Dorsolateral prefrontal cortex (tissue), 120 donors: ENCODE measurements at regions of chr17 and their contacts with region 1.

Region 1: GRCh38 chr17:30093463-30094147 is 23.0 kb upstream of the NSRP1 start:
- DNase-seq: peak in 4 of 10 donors; percentile 32 to 50 (median 44)
- H3K4me3 ChIP-seq: peak overlapping the region in 3 of 59 donors; percentile 16 to 31 (median 20)
- H3K27ac ChIP-seq: no peak overlapping the region
- H3K27me3 ChIP-seq: peaks cover 0 to under 1% (median 0%) of the 10 kb centered on the region in 45 donors
- CTCF ChIP-seq: peak; percentile 70 to 96 (median 86)

Region 2: GRCh38 chr17:29579866-29580771 is 513.5 kb before region 1 on chr17:
- intact Hi-C with region 1: loop called in 1 of 2 experiments (anchors 10 kb)
- DNase-seq: peak; percentile 90 to 94 (median 92)
- H3K4me3 ChIP-seq: peak overlapping the region in 3 of 59 donors; percentile 8 to 27 (median 15)
- H3K27ac ChIP-seq: peak overlapping the region in 58 of 59 donors; percentile 15 to 99 (median 95)
- H3K27me3 ChIP-seq: no peaks in the 10 kb centered on the region
- CTCF ChIP-seq: peak; percentile 71 to 99 (median 97)

Region 3: GRCh38 chr17:29617125-29617480 is 476.5 kb before region 1 on chr17:
- intact Hi-C with region 1: loop called (anchors 10 kb)
- DNase-seq: peak in 9 of 10 donors; percentile 78 to 94 (median 90)
- H3K4me3 ChIP-seq: peak overlapping the region; percentile 23 to 73 (median 54)
- H3K27ac ChIP-seq: peak overlapping the region in 51 of 59 donors; percentile 14 to 96 (median 76)
- H3K27me3 ChIP-seq: no peaks in the 10 kb centered on the region
- CTCF ChIP-seq: peak in 55 of 56 donors; percentile 45 to 85 (median 69)

Region 4: GRCh38 chr17:29622337-29623282 is 471.0 kb before region 1 on chr17 and contains the start of gene CORO6:
- intact Hi-C with region 1: loop called (anchors 10 kb)
- DNase-seq: peak in 5 of 10 donors; percentile 64 to 79 (median 69)
- H3K4me3 ChIP-seq: peak within 1 kb of the TSS; percentile 42 to 92 (median 80)
- H3K27ac ChIP-seq: peak within 1 kb of the TSS in 53 of 59 donors; percentile 1 to 89 (median 77)
- H3K27me3 ChIP-seq: no peaks in the 10 kb centered on the region
- CTCF ChIP-seq: peak in 3 of 56 donors; percentile 10 to 15 (median 14)
- total RNA-seq, gene CORO6: 31.5 to 153 (median 80.8) TPM

Region 5: DNA sequence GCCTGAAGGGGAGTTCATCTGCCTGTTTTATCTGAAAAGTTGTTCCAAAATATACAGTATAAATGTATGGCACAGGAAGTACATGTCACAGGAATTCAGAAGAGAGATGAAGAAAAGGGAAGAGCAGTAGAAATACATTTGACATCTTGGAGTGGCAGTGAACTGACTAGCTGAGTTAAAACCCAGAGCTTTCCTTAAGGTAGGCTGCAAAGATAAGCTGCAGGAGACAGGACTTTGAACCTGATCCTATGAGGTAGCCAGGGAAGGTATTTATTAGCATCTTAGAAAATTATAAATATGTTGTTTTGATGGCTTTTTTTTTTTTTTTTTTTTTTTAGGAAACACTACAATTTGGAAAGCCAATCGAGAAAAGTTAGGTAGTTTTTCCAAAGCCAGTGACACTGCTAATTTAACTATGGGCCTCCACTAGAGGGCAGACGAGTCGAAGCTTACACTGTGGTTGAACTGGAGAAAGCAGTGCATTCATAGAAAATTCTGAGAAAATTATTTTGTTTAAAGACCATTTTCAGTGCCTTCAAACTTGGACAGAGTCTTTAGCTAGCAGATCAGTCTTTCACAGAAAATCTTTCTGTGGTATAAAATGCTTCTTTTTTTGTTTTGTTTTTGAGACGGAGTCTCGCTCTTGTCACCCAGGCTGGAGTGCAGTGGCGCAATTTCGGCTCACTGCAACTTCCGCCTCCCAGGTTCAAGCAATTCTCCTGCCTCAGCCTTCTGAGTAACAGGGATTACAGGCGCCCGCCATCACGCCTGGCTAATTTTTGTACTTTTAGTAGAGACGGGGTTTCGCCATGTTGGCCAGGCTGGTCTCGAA is 285.9 kb before region 1 on chr17:
- intact Hi-C with region 1: loop called (anchors 10 kb)
- DNase-seq: peak in 7 of 10 donors; percentile 48 to 82 (median 63)
- H3K4me3 ChIP-seq: peak overlapping the region in 33 of 59 donors; percentile 3 to 46 (median 21)
- H3K27ac ChIP-seq: peak overlapping the region in 29 of 59 donors; percentile 1 to 81 (median 38)
- H3K27me3 ChIP-seq: no peaks in the 10 kb centered on the region
- CTCF ChIP-seq: peak; percentile 72 to 92 (median 85)

Region 6: DNA sequence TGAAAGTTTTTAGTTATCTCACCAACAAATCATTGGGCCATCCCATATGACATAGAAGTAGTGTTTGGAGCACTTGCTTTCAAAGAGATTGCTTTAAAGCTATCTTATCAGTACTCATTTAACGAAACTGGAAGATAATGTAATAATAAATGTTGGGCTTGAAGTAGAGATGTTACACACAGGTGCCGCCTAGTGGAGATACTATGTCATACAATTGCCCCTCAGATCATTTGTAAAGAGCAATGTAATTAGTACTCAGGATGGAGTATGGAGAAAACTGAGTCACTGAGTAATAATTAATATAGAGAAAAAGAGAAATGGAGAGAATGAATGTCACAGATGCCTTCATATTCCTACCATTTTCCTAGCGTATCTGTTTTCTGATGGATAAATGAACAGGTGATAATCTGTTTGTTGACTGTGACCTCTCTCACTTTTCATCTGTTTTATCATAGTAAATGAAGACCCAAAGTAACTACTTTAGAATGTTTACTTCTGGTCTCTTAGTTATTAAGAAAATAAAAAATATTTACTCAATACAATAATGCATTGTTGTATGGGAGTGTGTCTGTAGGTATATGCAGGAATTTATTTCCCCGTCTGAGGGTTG is 71.8 kb before region 1 on chr17:
- intact Hi-C with region 1: loop called in 1 of 2 experiments (anchors 10 kb)
- DNase-seq: no peak
- H3K4me3 ChIP-seq: peak overlapping the region in 2 of 59 donors; percentile 15 to 17
- H3K27ac ChIP-seq: no peak overlapping the region
- H3K27me3 ChIP-seq: no peaks in the 10 kb centered on the region
- CTCF ChIP-seq: peak; percentile 54 to 84 (median 74)

Region 7: GRCh38 chr17:30203471-30203981 is 109.9 kb after region 1 on chr17:
- intact Hi-C with region 1: no loop called
- DNase-seq: no peak
- H3K4me3 ChIP-seq: no peak overlapping the region
- H3K27ac ChIP-seq: no peak overlapping the region
- H3K27me3 ChIP-seq: no peaks in the 10 kb centered on the region
- CTCF ChIP-seq: no peak